Mammary epithelial cell (primary cell): ENCODE measurements at regions of chr19 and their contacts with region 1.

Region 1: DNA sequence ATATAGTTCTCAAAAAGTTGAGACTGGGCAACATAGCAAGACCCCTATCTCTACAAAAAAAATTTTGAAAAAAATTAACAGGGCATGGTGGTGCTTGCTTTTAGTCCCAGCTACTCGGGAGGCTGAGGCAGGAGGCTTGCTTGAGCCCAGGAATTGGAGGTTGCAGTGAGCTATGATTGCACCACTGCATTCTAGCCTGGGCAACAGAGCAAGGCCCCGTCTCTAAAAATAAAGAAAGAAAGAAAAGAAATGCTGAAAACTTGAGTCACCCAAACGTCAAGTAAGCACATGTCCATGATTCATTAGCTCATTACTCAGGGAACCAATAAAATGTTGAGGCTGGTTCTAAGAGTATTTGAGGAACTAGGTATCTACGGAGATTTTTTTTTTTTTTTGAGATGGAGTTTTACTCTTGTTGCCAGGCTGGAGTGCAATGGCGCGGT is 33.9 kb upstream of the SEMA6B start:
- DNase-seq: peak; percentile 93
- H3K4me3 ChIP-seq: no peak overlapping the region
- H3K27ac ChIP-seq: no peak overlapping the region
- H3K4me1 ChIP-seq: peaks cover 6% of the 10 kb centered on the region
- H3K27me3 ChIP-seq: no peaks in the 10 kb centered on the region
- CTCF ChIP-seq: no peak

Region 2: GRCh38 chr19:4557971-4558941 is 35.2 kb before region 1 on chr19:
- CTCF ChIA-PET with region 1: interaction called, 10 read pairs
- dilution Hi-C with region 1: no loop called
- in situ Hi-C with region 1: no loop called
- intact Hi-C with region 1: no loop called
- DNase-seq: no peak
- H3K4me3 ChIP-seq: no peak overlapping the region
- H3K27ac ChIP-seq: no peak overlapping the region
- H3K4me1 ChIP-seq: no peaks in the 10 kb centered on the region
- H3K27me3 ChIP-seq: no peaks in the 10 kb centered on the region
- CTCF ChIP-seq: peak; percentile 89 to 97

Region 3: GRCh38 chr19:4633140-4633967 is 39.9 kb after region 1 on chr19:
- CTCF ChIA-PET with region 1: interaction called, 4 read pairs
- dilution Hi-C with region 1: no loop called
- in situ Hi-C with region 1: no loop called
- intact Hi-C with region 1: loop called (anchors 1 kb)
- DNase-seq: peak; percentile 84
- H3K4me3 ChIP-seq: no peak overlapping the region
- H3K27ac ChIP-seq: no peak overlapping the region
- H3K4me1 ChIP-seq: peaks cover 29% of the 10 kb centered on the region
- H3K27me3 ChIP-seq: no peaks in the 10 kb centered on the region
- CTCF ChIP-seq: peak; percentile 88 to 90